Prostate gland (tissue), 2 donors: ENCODE measurements at regions of chr5 and their contacts with region 1.

Region 1: DNA sequence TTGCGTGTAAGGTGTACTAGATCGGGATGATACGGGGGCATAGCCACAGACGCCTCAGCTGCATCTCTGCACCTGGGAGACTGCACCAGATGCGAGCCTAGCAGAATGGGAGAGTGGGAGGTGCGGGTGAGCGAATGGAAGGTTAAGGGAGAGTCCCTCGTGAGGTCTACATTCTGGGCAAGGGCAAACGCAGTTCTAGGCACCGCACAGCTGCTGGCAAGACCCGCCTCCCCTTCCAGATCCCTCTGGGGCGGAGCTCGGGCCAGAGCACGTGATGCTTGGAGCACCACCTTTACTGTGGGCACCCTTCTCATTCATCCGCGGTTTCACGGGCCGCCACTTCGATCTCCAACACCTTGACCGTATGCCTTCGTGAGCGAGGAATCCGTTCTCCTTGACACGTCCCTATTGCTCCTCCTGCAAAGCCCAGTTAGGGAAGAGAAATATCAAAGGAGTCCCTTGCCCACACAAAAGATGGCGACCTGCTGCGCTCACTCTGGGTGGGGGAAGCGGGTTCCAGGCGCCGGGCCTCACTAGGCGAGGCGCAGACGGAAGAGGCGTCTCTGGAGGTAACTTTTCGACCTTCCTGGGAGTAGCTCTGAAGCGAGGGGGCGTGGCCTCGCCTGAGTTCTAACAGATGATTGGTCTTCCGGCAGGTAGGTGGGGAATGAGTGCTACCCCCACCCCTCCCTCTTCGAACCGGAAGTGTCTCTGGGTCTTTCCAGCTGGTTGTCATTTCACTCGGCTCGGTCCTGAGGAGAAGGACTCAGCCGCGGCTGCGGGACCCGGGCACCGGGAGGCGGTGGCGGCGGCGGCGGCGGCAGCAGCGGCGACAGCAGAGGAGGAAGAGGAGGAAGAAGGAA is at the start of gene CPEB4:
- DNase-seq: peak; percentile 100
- H3K4me3 ChIP-seq: peak within 1 kb of the TSS; percentile 70 to 71
- H3K27ac ChIP-seq: peak within 1 kb of the TSS; percentile 78 to 90
- H3K4me1 ChIP-seq: peaks cover 5% of the 10 kb centered on the region
- H3K27me3 ChIP-seq: no peaks in the 10 kb centered on the region
- CTCF ChIP-seq: no peak
- POLR2A ChIP-seq: peak; percentile 99
- total RNA-seq, gene CPEB4: 36.5 to 45.3 TPM

Region 2: DNA sequence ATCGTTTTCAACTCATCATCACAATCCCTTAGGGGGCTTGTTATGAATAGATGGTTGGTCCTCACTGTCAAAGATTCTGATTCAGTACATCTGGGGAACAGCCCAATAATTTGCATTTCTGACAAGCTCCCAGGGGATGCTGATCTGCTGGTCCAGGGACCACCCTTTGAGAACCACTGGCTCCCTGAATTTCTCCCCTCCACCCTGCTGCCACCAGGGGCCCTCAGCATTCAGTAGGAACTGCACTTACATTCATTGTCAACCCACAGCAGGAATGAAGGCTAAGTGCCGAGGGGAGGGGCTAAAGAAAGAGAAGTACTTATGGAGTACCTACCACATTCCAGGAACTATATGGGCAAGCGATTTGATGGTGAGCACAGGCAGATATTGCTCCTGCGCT is 357.3 kb before region 1 on chr5:
- intact Hi-C with region 1: no loop called
- DNase-seq: no peak
- H3K4me3 ChIP-seq: no peak overlapping the region
- H3K27ac ChIP-seq: no peak overlapping the region
- H3K4me1 ChIP-seq: no peaks in the 10 kb centered on the region
- H3K27me3 ChIP-seq: no peaks in the 10 kb centered on the region
- CTCF ChIP-seq: no peak
- POLR2A ChIP-seq: no peak

Region 3: GRCh38 chr5:173615884-173616576 is 271.8 kb before region 1 on chr5:
- intact Hi-C with region 1: loop called (anchors 5 kb)
- DNase-seq: peak; percentile 73
- H3K4me3 ChIP-seq: peak overlapping the region; percentile 73 to 93
- H3K27ac ChIP-seq: peak overlapping the region; percentile 91
- H3K4me1 ChIP-seq: peaks cover 13% of the 10 kb centered on the region
- H3K27me3 ChIP-seq: no peaks in the 10 kb centered on the region
- CTCF ChIP-seq: peak; percentile 26 to 67 (median 62)
- POLR2A ChIP-seq: no peak

Region 4: DNA sequence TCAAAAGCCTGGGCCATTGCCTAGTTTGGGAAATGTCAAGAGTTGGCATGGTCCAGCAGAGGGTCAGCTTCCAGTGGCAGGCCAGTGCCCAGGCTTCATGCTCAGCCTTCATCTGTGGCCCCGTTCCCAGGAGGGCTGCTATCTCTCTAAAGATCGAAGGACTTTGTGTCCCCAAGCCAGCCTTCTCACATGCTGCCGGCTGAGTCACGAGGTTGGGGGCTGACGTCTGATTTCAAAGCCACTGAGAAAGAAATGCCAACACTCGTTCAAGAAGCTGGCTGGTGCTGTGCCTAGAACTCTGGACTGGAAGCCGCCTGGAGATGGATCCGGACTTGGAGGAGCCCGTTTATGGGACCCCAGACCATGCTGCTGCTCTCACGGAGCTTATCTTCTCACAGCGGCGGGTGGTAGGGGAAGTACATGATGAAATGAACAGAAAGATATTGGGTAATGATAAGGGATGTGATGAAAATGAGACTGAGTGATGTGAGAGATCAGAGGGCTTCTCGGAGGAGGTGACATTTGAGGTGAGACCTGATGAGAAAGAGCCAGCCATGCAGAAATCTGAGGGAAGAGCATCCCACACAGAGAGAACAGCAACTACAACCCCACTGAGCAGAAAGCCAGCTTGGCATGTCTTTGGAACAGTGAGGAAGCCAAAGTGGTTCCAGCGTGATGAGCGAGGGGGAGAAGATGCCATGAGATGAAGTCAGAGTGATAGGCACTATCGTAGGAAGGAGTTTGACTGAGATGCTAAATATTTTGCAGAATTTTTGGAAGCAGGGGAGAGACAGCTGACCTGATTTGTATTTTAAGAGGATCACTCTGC is 216.5 kb before region 1 on chr5:
- intact Hi-C with region 1: loop called (anchors 5 kb)
- DNase-seq: peak; percentile 75
- H3K4me3 ChIP-seq: no peak overlapping the region
- H3K27ac ChIP-seq: peak overlapping the region; percentile 41 to 52
- H3K4me1 ChIP-seq: no peaks in the 10 kb centered on the region
- H3K27me3 ChIP-seq: no peaks in the 10 kb centered on the region
- CTCF ChIP-seq: no peak
- POLR2A ChIP-seq: no peak

Region 5: DNA sequence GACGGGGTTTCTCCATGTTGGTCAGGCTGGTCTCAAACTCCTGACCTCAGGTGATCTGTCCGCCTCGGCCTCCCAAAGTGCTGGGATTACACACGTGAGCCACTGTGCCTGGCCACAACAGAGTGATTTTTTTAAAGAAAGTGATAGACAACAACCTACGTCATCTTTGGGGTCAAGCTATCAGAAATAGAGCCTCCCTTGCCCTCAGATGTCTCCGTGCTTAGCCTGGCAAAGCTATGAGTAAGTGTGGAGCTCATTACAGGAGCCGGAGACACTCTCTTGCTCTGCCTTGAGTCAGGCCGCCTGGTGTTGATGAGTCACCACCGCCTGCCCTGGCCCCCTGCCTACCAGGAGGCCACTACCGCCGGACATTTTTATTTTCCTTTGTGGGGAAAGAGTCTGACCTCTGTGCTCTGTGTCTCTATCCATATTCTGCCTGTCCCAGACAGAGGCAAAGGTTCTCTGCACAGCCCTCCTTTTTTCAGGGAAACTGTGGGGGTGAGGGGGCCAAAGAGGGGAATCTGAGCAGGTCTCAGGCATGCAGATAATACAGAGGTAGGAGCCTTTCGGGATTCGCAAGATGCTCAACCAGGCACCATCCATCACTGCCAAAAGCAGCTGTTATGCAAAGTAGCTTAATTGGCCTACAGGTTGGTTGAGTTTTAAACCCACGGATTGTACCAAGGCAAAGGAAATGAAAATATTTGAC is 123.4 kb before region 1 on chr5:
- intact Hi-C with region 1: loop called (anchors 10 kb)
- DNase-seq: peak; percentile 46
- H3K4me3 ChIP-seq: no peak overlapping the region
- H3K27ac ChIP-seq: peak overlapping the region in 1 of 2 donors; percentile 27
- H3K4me1 ChIP-seq: no peaks in the 10 kb centered on the region
- H3K27me3 ChIP-seq: no peaks in the 10 kb centered on the region
- CTCF ChIP-seq: peak in 1 of 4 experiments; percentile 9
- POLR2A ChIP-seq: no peak

Region 6: DNA sequence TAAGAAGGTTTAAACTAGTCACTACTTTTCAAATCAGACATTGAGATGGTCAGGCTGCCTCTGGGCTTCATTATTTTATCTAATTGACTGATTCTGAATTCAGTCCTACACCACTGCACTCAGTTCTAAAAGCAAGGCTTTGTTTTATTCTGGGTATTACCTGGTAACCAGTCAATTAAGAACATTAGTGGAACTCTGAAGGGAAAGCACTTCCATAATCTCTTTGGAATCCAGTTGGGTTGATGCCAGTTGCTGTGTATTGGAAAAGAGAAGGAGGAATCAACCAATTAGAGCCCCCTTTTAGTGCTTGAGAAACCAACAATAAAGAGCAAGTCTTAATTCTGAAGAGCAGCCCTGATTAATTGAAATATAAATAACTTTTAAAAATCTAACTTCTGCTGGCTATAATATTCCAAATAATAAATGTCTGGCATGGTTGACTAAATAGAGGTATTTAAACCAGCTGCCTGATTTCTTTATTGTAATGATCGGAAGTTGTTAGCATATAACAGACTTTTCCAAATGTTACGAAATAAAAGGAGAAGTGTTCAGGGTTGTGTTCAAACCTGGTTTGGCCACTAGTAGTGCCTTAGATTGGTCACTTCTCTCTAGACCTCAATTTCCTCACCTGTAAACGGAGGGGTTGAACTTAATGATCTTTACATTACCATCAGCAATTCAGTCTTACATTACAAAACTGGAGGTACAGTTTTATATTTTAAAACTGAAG is 32.3 kb after region 1 on chr5:
- intact Hi-C with region 1: loop called (anchors 2 kb)
- DNase-seq: no peak
- H3K4me3 ChIP-seq: no peak overlapping the region
- H3K27ac ChIP-seq: no peak overlapping the region
- H3K4me1 ChIP-seq: no peaks in the 10 kb centered on the region
- H3K27me3 ChIP-seq: no peaks in the 10 kb centered on the region
- CTCF ChIP-seq: no peak
- POLR2A ChIP-seq: no peak

Region 7: GRCh38 chr5:173972925-173973615 is 85.2 kb after region 1 on chr5:
- intact Hi-C with region 1: loop called (anchors 2 kb)
- DNase-seq: peak; percentile 85
- H3K4me3 ChIP-seq: peak overlapping the region; percentile 26 to 42
- H3K27ac ChIP-seq: peak overlapping the region in 1 of 2 donors; percentile 43
- H3K4me1 ChIP-seq: no peaks in the 10 kb centered on the region
- H3K27me3 ChIP-seq: no peaks in the 10 kb centered on the region
- CTCF ChIP-seq: peak; percentile 79 to 95 (median 94)
- POLR2A ChIP-seq: no peak